ENCODE measurements at regions of chr2 and their contacts with region 1.

Region 1: DNA sequence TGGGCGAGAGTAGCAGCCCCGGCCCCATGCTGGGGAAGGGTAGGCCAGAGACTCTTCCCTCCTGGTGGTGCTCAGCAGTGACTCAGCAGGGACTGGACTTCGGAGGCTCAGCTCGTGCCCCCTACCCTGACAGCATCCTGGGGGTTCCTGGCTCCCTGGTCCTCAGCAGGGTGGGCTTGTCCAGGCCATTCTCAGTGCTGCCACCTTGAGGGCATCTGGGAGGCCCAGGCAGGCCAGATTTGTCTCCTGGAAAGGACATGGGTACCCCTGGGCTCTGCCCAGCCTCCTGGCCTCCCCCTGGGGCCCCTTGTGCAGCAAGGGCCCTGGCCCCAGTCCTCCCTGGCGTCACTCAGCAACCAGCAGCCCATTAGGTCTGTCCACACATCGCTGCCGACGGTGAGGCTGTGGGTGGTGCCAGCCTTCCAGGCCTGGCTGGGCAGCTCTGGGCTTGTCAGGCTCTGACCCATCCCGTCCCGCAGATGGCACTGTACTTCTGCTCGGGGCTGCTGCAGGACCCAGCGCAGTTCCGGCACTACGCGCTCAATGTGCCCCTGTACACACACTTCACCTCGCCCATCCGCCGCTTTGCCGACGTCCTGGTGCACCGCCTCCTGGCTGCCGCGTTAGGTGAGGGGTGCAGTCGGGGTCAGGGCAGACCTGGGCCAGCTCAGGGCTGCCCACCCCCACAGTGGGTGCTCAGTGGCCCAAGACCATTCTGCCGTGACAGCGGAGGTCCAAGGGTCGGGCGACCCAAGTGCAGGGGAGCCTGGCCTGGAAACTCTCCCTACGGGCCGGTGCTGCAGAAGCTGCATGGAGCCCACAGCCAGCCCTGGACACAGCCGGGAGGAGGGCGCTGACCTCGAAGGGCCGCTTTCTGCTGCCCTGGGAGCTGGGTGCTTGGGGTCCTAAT is 44.9 kb upstream of the ALPP start:
- DNase-seq: peak in 1 of 2 experiments; percentile 76
- H3K4me3 ChIP-seq: no peak overlapping the region
- H3K27ac ChIP-seq: no peak overlapping the region
- H3K4me1 ChIP-seq: peaks cover 0 to 9% (median 6%) of the 10 kb centered on the region in 4 experiments; a peak in 4 of 7 replicates
- H3K27me3 ChIP-seq: no peaks in the 10 kb centered on the region
- CTCF ChIP-seq: peak in 2 of 3 experiments; percentile 65 to 69; a peak in 3 of 4 replicates
- EP300 ChIP-seq: no peak
- POLR2A ChIP-seq: no peak
- RAD21 ChIP-seq: no peak; a peak in 1 of 4 replicates

Region 2: GRCh38 chr2:232133078-232133477 is 200.5 kb before region 1 on chr2:
- CTCF ChIA-PET with region 1: no interaction called
- POLR2A ChIA-PET with region 1: no interaction called
- DNase-seq: no peak
- H3K4me3 ChIP-seq: no peak overlapping the region
- H3K27ac ChIP-seq: no peak overlapping the region
- H3K4me1 ChIP-seq: peaks cover 0 to 4% (median 0%) of the 10 kb centered on the region in 4 experiments; a peak in 2 of 7 replicates
- H3K27me3 ChIP-seq: no peaks in the 10 kb centered on the region
- CTCF ChIP-seq: peak; percentile 8 to 40 (median 39)
- EP300 ChIP-seq: no peak
- POLR2A ChIP-seq: no peak
- RAD21 ChIP-seq: peak; percentile 40 to 56; a peak in 2 of 4 replicates

Region 3: DNA sequence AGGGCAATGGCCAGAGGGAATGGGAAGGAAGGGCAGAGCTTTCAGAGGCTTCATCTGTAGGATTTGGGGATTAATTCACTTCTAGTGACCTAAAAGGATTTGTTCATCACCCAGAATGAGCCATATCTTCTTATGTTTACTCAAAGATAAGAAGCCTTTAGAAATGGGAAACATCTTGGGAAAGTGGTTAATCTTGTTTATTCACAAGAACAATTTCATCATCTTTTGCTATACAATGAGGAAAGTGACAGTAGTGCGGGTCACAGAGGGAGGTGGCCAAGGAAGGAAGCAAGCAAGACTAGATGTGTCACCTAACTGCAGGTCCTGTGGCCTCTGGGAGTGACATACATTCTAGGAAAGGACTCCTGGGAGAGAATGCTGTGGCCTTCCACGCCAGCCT is 95.5 kb before region 1 on chr2:
- CTCF ChIA-PET with region 1: no interaction called
- POLR2A ChIA-PET with region 1: no interaction called
- DNase-seq: no peak
- H3K4me3 ChIP-seq: no peak overlapping the region
- H3K27ac ChIP-seq: no peak overlapping the region
- H3K4me1 ChIP-seq: no peaks in the 10 kb centered on the region
- H3K27me3 ChIP-seq: no peaks in the 10 kb centered on the region
- CTCF ChIP-seq: no peak
- EP300 ChIP-seq: no peak
- POLR2A ChIP-seq: no peak
- RAD21 ChIP-seq: no peak

Region 4: GRCh38 chr2:232268636-232269165 is 64.9 kb before region 1 on chr2:
- CTCF ChIA-PET with region 1: no interaction called
- POLR2A ChIA-PET with region 1: no interaction called
- DNase-seq: no peak
- H3K4me3 ChIP-seq: no peak overlapping the region
- H3K27ac ChIP-seq: no peak overlapping the region
- H3K4me1 ChIP-seq: peaks cover 0 to 6% (median 0%) of the 10 kb centered on the region in 4 experiments; a peak in 2 of 7 replicates
- H3K27me3 ChIP-seq: no peaks in the 10 kb centered on the region
- CTCF ChIP-seq: no peak
- EP300 ChIP-seq: no peak
- POLR2A ChIP-seq: no peak
- RAD21 ChIP-seq: no peak

Region 5: GRCh38 chr2:232321156-232321816 is 12.3 kb before region 1 on chr2:
- CTCF ChIA-PET with region 1: interaction called, 27 read pairs
- POLR2A ChIA-PET with region 1: no interaction called
- DNase-seq: peak in 1 of 2 experiments; percentile 79
- H3K4me3 ChIP-seq: no peak overlapping the region
- H3K27ac ChIP-seq: no peak overlapping the region
- H3K4me1 ChIP-seq: peaks cover 0 to 10% (median 3%) of the 10 kb centered on the region in 4 experiments; a peak in 5 of 7 replicates
- H3K27me3 ChIP-seq: no peaks in the 10 kb centered on the region
- CTCF ChIP-seq: peak in 2 of 3 experiments; percentile 49 to 56; a peak in 3 of 4 replicates
- EP300 ChIP-seq: no peak
- POLR2A ChIP-seq: no peak
- RAD21 ChIP-seq: peak; percentile 23 to 31; a peak in 3 of 4 replicates

Region 6: GRCh38 chr2:232348936-232349335 is 15.3 kb after region 1 on chr2:
- CTCF ChIA-PET with region 1: interaction called, 27 read pairs
- POLR2A ChIA-PET with region 1: no interaction called
- DNase-seq: peak in 1 of 2 experiments; percentile 33
- H3K4me3 ChIP-seq: no peak overlapping the region
- H3K27ac ChIP-seq: no peak overlapping the region
- H3K4me1 ChIP-seq: peaks cover 0 to 4% (median 2%) of the 10 kb centered on the region in 4 experiments; a peak in 3 of 7 replicates
- H3K27me3 ChIP-seq: peaks cover 25 to 47% (median 33%) of the 10 kb centered on the region in 4 experiments; a peak in 6 of 7 replicates
- CTCF ChIP-seq: no peak
- EP300 ChIP-seq: no peak
- POLR2A ChIP-seq: no peak
- RAD21 ChIP-seq: no peak

Region 7: GRCh38 chr2:232372231-232373208 is 38.9 kb after region 1 on chr2:
- CTCF ChIA-PET with region 1: interaction called, 92 read pairs
- POLR2A ChIA-PET with region 1: no interaction called
- DNase-seq: no peak
- H3K4me3 ChIP-seq: no peak overlapping the region
- H3K27ac ChIP-seq: no peak overlapping the region
- H3K4me1 ChIP-seq: peaks cover 0 to 23% (median 11%) of the 10 kb centered on the region in 4 experiments; a peak in 6 of 7 replicates
- H3K27me3 ChIP-seq: no peaks in the 10 kb centered on the region
- CTCF ChIP-seq: no peak
- EP300 ChIP-seq: no peak
- POLR2A ChIP-seq: no peak
- RAD21 ChIP-seq: no peak

Region 8: DNA sequence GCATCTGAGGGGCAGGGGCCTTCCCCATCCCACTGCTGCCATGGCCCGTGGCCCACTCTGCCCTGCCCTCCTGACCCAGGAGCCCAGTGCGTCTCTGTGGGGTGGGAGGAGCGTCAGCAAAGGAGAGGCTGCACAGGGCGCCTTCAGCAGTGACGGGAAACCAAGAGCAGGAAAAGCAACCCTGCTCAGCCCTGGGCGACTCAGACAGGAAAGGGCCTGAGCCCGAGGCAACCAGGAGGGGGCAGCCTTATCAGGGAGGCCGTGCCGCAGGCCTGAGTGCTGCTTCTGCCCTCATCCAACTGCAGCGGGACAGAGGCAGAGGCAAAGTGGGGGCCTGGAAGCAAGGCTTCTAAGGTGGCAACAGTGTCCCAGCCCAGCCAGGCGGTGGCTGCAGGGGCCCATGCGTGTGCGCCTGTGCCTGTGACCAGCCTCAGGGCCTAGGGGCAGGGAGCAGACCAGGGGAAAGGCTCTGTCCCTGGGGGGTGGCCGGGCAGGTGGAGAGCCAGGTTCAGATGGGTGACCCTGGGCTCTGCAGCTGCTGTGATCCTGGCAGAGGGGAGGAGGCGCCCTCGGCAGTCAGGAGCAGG is 99.1 kb after region 1 on chr2:
- CTCF ChIA-PET with region 1: interaction called, 52 read pairs
- POLR2A ChIA-PET with region 1: no interaction called
- DNase-seq: peak in 1 of 2 experiments; percentile 87
- H3K4me3 ChIP-seq: no peak overlapping the region
- H3K27ac ChIP-seq: peak overlapping the region; percentile 27; the same call in 1 of the 2 replicates
- H3K4me1 ChIP-seq: peaks cover 0 to 9% (median 7%) of the 10 kb centered on the region in 4 experiments; a peak in 6 of 7 replicates
- H3K27me3 ChIP-seq: peaks cover 0 to 2% (median 0%) of the 10 kb centered on the region in 4 experiments; a peak in 1 of 7 replicates
- CTCF ChIP-seq: peak in 2 of 3 experiments; percentile 50 to 78; a peak in 2 of 4 replicates
- EP300 ChIP-seq: no peak
- POLR2A ChIP-seq: no peak
- RAD21 ChIP-seq: peak; percentile 24 to 42; a peak in 3 of 4 replicates

Measured in H1 (cell line).